ENCODE measurements at regions of chr10 and their contacts with region 1.

Region 1: GRCh38 chr10:17001961-17002749 is 127.5 kb downstream of the CUBN start:
- DNase-seq: peak in 1 of 2 donors; percentile 82
- H3K4me3 ChIP-seq: peak overlapping the region; percentile 23 to 28
- H3K27ac ChIP-seq: peak overlapping the region; percentile 83
- H3K4me1 ChIP-seq: peaks cover 10 to 40% of the 10 kb centered on the region in 2 donors
- H3K27me3 ChIP-seq: no peaks in the 10 kb centered on the region
- CTCF ChIP-seq: no peak

Region 2: DNA sequence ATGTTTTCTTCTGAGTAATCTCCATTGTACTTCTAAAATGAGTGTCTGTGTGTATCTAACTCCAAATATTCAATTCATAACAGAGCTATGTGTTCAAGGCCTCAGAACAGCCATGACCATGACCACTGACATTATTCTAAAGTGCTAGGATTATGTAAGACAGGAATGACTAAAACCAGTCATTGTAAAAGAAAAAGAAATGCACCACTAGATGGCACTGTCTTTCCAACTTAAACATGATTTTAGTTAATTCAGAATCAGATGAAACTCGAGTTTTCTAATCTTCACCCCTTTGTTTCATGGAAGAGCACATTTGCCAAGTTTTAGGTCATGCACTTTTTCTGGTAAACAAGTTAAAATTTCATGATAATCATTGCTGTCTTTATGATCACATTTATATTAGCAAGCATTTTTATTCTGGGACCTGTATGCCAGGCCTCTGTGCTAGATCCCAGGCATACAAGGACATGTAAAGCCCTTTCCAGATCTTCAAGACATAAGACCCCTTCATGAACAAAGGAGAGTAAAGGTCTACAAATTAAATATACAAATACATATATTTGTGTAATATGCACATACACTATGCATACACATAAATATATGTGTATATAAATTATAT is 158.8 kb before region 1 on chr10:
- intact Hi-C with region 1: loop called (anchors 2 kb)
- DNase-seq: no peak
- H3K4me3 ChIP-seq: no peak overlapping the region
- H3K27ac ChIP-seq: no peak overlapping the region
- H3K4me1 ChIP-seq: peaks cover 5 to 13% of the 10 kb centered on the region in 2 donors
- H3K27me3 ChIP-seq: no peaks in the 10 kb centered on the region
- CTCF ChIP-seq: peak; percentile 62 to 69 (median 67)

Region 3: GRCh38 chr10:17023386-17024298 is 21.5 kb after region 1 on chr10:
- intact Hi-C with region 1: loop called (anchors 2 kb)
- DNase-seq: peak; percentile 59 to 93
- H3K4me3 ChIP-seq: peak overlapping the region in 1 of 2 donors; percentile 28
- H3K27ac ChIP-seq: peak overlapping the region; percentile 48 to 64
- H3K4me1 ChIP-seq: peaks cover 4 to 31% of the 10 kb centered on the region in 2 donors
- H3K27me3 ChIP-seq: no peaks in the 10 kb centered on the region
- CTCF ChIP-seq: no peak

Region 4: DNA sequence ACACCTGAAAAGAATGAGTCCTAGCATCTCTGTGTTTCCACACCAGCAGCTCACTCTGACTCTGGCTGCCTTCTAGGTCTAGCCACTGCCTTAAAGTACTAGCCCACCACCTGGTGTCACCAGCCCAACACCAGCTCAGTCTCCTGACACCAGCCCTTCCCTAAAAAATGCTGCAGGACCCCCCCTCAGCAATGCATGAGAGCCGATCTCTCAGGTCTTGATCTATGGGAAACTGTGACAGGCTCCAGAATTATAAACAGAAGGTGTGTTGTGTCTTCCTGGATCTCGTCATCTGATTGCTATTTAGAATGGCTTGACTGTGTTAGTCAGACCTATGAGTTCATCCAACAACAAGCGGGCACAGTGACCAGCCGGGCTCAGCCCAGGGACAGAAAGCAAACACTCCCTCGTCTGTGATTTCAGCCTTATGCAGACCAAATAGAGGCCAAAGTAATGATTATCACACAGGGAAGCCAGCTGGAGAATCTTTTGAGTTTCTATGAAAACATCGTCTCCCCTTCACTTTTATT is 60.9 kb after region 1 on chr10:
- intact Hi-C with region 1: loop called (anchors 2 kb)
- DNase-seq: peak; percentile 35 to 91
- H3K4me3 ChIP-seq: peak overlapping the region in 1 of 2 donors; percentile 16
- H3K27ac ChIP-seq: peak overlapping the region; percentile 79 to 85
- H3K4me1 ChIP-seq: peaks cover 6 to 32% of the 10 kb centered on the region in 2 donors
- H3K27me3 ChIP-seq: no peaks in the 10 kb centered on the region
- CTCF ChIP-seq: no peak

Region 5: GRCh38 chr10:17075533-17076359 is 73.6 kb after region 1 on chr10:
- intact Hi-C with region 1: loop called (anchors 2 kb)
- DNase-seq: peak in 1 of 2 donors; percentile 75
- H3K4me3 ChIP-seq: no peak overlapping the region
- H3K27ac ChIP-seq: peak overlapping the region; percentile 82 to 84
- H3K4me1 ChIP-seq: peaks cover 0 to 27% of the 10 kb centered on the region in 2 donors
- H3K27me3 ChIP-seq: no peaks in the 10 kb centered on the region
- CTCF ChIP-seq: no peak

Region 6: GRCh38 chr10:17200912-17201793 is 199.0 kb after region 1 on chr10 and contains the start of gene TRDMT1:
- intact Hi-C with region 1: loop called (anchors 5 kb)
- DNase-seq: peak; percentile 47 to 94
- H3K4me3 ChIP-seq: peak within 1 kb of the TSS; percentile 70 to 73
- H3K27ac ChIP-seq: peak within 1 kb of the TSS; percentile 94 to 96
- H3K4me1 ChIP-seq: peaks cover 0 to 18% of the 10 kb centered on the region in 2 donors
- H3K27me3 ChIP-seq: no peaks in the 10 kb centered on the region
- CTCF ChIP-seq: no peak
- total RNA-seq, gene TRDMT1: 5.7 TPM

Region 7: GRCh38 chr10:17228091-17228940 is 226.2 kb after region 1 on chr10 and contains the start of gene VIM:
- intact Hi-C with region 1: loop called (anchors 1 kb)
- DNase-seq: peak; percentile 91 to 98
- H3K4me3 ChIP-seq: peak within 1 kb of the TSS; percentile 87 to 93
- H3K27ac ChIP-seq: peak within 1 kb of the TSS; percentile 97 to 99
- H3K4me1 ChIP-seq: peaks cover 0 to 22% of the 10 kb centered on the region in 2 donors
- H3K27me3 ChIP-seq: no peaks in the 10 kb centered on the region
- CTCF ChIP-seq: peak in 2 of 3 experiments; percentile 12 to 13
- total RNA-seq, gene VIM: 6,230 TPM

Measured in ascending aorta (tissue), 2 donors.